ENCODE measurements at regions of chr2 and their contacts with region 1.

Region 1: DNA sequence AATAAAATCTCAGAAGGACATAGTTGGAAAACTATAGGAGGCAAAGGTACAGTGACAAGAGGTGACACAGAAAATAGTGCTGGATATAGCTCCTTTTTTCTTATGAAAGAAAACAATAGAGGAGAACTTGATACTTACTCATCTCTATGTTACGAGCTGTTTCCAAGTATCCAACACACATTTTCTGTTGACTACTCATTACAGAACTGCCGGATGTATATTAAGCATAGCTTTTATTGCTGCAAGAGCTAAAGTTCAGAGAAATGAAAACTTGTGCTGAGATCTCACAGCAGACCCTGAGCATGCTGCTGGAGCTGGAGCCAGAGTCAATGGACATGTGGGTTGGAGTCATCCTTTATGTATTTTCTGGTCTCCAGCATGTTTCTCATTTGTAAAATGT is 210.0 kb upstream of the NT5C1B start:
- DNase-seq: no peak
- ATAC-seq: no peak
- H3K4me3 ChIP-seq: no peak overlapping the region
- H3K27ac ChIP-seq: no peak overlapping the region
- H3K4me1 ChIP-seq: peaks cover 31% of the 10 kb centered on the region
- H3K27me3 ChIP-seq: peaks cover 0 to 26% of the 10 kb centered on the region in 2 experiments; a peak in 3 of 5 replicates
- CTCF ChIP-seq: no peak
- EP300 ChIP-seq: no peak
- POLR2A ChIP-seq: no peak
- RAD21 ChIP-seq: no peak

Region 2: DNA sequence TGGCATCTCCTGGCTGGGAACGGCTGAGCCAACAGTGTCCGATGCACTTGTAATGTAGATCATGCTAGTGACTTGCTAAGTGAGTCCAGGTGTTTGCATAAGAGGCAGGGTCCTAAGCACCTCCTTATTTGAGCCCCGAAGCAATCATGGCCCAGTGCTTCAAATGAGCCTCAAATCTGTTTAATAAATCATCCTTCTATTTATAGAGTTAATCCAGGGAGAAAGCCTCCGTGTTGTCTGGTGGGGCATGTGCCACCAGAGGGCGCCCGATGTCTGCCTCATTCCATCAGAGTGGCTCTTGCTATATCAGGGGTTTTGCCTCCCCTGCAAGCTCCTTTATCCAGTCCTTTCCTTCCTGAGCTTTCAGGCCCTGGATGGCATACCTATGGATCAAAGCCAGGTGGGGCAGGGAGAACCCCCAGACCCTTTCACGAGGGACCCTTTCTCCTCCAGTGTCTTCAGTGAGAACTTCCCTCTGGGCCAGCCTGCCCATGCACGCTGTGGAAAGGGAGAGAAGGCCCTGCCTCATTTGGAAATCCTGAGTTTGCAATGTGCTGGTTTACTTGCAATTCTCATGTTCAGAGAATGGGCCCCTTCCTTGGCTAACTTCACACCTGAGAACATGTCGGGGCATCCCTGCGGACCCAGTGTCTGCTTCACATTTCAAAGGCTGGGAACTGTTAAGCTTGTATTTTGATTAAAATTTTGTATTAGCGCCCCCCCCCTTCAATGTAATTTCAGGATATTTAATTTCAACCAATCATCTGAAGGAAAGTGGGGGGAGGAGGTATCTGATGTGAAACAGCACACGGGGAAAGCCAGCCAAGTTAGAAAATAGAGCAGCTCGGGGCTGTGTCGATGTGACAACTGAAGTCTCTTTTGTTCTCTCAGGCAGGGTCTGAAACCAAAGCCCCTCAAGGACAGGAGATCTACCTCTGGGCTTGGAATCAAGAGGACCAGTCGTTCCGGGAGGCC is 278.7 kb before region 1 on chr2:
- CTCF ChIA-PET with region 1: no interaction called
- POLR2A ChIA-PET with region 1: no interaction called
- in situ Hi-C with region 1: no loop called
- intact Hi-C with region 1: loop called (anchors 1 kb)
- DNase-seq: peak; percentile 71
- ATAC-seq: peak; percentile 96
- H3K4me3 ChIP-seq: no peak overlapping the region
- H3K27ac ChIP-seq: no peak overlapping the region
- H3K4me1 ChIP-seq: no peaks in the 10 kb centered on the region
- H3K27me3 ChIP-seq: peaks cover 2 to 11% of the 10 kb centered on the region in 2 experiments; a peak in 4 of 5 replicates
- CTCF ChIP-seq: peak; percentile 93
- EP300 ChIP-seq: no peak
- POLR2A ChIP-seq: no peak
- RAD21 ChIP-seq: peak; percentile 95

Region 3: DNA sequence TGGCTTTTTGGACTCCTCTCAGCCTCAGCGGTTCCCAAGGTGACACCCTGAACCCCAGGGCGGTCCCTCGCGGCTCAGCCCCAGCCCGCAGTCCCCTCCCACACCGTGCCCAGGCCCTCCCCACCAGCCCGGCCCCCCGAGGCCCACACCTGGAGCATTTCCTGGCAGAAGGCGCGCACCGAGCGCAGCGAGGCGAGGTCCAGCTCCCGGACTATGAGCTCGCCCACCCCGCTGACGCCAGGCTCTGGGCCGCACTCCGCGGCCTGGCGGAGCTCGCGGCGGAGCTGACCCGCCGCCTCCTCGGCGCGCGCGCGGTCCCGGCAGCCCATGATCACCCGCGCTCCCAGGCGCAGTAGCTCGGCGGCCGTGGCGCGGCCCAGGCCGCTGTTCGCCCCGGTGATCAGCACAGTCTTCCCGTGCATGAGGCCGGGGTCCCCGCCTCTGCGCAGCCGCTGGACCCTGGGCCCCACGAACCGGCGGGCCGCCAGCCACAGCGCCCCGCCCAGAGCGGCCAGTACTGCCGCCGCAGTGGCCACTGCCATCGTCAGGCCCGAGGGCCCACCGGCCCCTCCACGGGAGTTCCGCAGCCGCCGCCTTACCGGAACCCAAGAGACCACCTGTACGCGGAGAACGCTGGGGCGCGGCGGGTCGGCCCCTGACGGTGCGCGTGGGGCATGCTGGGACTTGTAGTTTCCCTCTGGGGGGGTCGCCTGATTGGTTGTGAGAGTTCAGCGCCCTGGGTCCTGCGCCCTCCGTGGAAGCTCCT is 239.2 kb before region 1 on chr2 and contains the start of gene RDH14:
- CTCF ChIA-PET with region 1: no interaction called
- POLR2A ChIA-PET with region 1: interaction called, 8 read pairs
- in situ Hi-C with region 1: no loop called
- intact Hi-C with region 1: loop called (anchors 1 kb)
- DNase-seq: peak; percentile 97
- ATAC-seq: peak; percentile 94
- H3K4me3 ChIP-seq: peak within 1 kb of the TSS; percentile 78 to 84 (median 83)
- H3K27ac ChIP-seq: peak within 1 kb of the TSS; percentile 87
- H3K4me1 ChIP-seq: peaks cover 27% of the 10 kb centered on the region
- H3K27me3 ChIP-seq: no peaks in the 10 kb centered on the region
- CTCF ChIP-seq: peak; percentile 35
- EP300 ChIP-seq: 0 out of 4 replicates have a peak, but pooled peaks of 1 of the 2 experiments have one; percentile 10
- POLR2A ChIP-seq: peak; percentile 70 to 74; a peak in 3 of 4 replicates
- RAD21 ChIP-seq: peak; percentile 79
- total RNA-seq, gene RDH14: 37.4 and 39.9 TPM in 2 replicates

Region 4: DNA sequence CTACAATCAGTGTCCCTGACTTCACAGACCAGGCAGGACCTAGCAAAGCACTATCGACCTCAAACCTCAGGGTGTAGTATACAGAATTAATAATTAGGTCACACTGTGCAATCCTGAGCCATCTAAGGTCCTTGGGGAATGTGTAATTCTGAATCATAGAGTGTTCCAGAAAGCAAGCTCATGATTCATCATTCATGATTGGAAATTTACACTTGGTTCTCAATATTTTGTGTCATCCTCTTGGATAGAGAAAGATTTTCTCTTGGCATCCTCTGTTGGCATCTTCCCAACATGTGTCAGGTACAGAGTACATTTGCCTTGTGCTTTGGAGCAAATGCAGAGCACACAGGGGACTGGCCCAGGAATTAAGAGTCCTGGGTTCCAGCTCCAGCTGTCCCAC is 34.9 kb after region 1 on chr2:
- CTCF ChIA-PET with region 1: no interaction called
- POLR2A ChIA-PET with region 1: interaction called, 4 read pairs
- in situ Hi-C with region 1: no loop called
- intact Hi-C with region 1: loop called (anchors 2 kb)
- DNase-seq: no peak
- ATAC-seq: no peak
- H3K4me3 ChIP-seq: no peak overlapping the region
- H3K27ac ChIP-seq: no peak overlapping the region
- H3K4me1 ChIP-seq: peaks cover 44% of the 10 kb centered on the region
- H3K27me3 ChIP-seq: no peaks in the 10 kb centered on the region
- CTCF ChIP-seq: no peak
- EP300 ChIP-seq: no peak
- POLR2A ChIP-seq: no peak
- RAD21 ChIP-seq: no peak

Region 5: GRCh38 chr2:18889565-18890332 is 90.4 kb after region 1 on chr2:
- CTCF ChIA-PET with region 1: no interaction called
- POLR2A ChIA-PET with region 1: no interaction called
- in situ Hi-C with region 1: no loop called
- intact Hi-C with region 1: loop called (anchors 1 kb)
- DNase-seq: peak; percentile 93
- ATAC-seq: peak; percentile 93
- H3K4me3 ChIP-seq: no peak overlapping the region
- H3K27ac ChIP-seq: no peak overlapping the region
- H3K4me1 ChIP-seq: peaks cover 16% of the 10 kb centered on the region
- H3K27me3 ChIP-seq: no peaks in the 10 kb centered on the region
- CTCF ChIP-seq: no peak
- EP300 ChIP-seq: peak in 1 of 2 experiments; percentile 61; a peak in 2 of 4 replicates
- POLR2A ChIP-seq: no peak
- RAD21 ChIP-seq: no peak

Region 6: GRCh38 chr2:19140596-19141219 is 341.3 kb after region 1 on chr2:
- CTCF ChIA-PET with region 1: no interaction called
- POLR2A ChIA-PET with region 1: no interaction called
- in situ Hi-C with region 1: no loop called
- intact Hi-C with region 1: loop called (anchors 1 kb)
- DNase-seq: peak; percentile 99
- ATAC-seq: peak; percentile 100
- H3K4me3 ChIP-seq: no peak overlapping the region
- H3K27ac ChIP-seq: no peak overlapping the region
- H3K4me1 ChIP-seq: peaks cover 19% of the 10 kb centered on the region
- H3K27me3 ChIP-seq: no peaks in the 10 kb centered on the region
- CTCF ChIP-seq: no peak
- EP300 ChIP-seq: peak; percentile 75 to 93
- POLR2A ChIP-seq: no peak
- RAD21 ChIP-seq: no peak

Region 7: DNA sequence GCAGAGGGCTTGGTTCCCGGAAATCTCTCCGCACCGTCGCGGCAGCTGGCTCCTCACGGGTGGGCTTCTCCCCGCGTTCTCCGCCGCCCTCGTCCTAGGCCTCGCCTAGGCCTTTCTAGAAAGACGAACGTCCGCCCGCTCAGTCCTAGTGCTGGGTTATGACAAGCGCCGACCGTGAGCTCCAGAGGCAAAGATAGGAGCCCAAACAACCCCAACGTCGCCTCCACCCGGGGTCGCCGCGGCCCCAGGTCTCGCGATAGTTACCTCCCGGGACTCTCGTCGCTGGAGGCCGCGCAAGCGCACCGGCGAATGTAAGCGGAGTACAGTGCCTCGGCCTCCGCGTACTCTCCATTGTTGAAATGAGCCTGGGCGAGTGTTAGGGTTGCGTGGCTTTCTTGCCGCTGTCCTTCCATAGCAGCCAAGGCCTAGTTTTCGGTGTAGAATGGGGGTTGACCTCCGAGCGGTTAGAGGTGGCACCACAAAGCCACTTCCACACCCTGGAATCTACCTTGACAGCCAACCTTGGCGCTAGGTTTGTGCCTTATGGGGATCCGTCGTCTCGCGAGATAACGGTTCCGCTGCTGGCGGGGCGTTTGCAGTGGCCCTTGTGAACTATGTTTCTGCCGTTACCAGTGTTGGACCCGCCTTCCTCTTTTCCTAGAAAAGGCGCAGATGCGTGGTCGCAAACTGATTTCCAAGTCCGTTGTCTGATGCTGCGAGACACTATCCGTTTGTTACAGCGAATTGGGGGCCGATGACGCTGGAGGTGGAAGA is 1102.2 kb after region 1 on chr2 and contains the start of gene TTC32:
- CTCF ChIA-PET with region 1: no interaction called
- POLR2A ChIA-PET with region 1: interaction called, 3 read pairs
- in situ Hi-C with region 1: no loop called
- intact Hi-C with region 1: loop called (anchors 5 kb)
- DNase-seq: peak; percentile 95
- ATAC-seq: peak; percentile 95
- H3K4me3 ChIP-seq: peak within 1 kb of the TSS; percentile 87 to 89 (median 87)
- H3K27ac ChIP-seq: peak within 1 kb of the TSS; percentile 95
- H3K4me1 ChIP-seq: peaks cover 30% of the 10 kb centered on the region
- H3K27me3 ChIP-seq: no peaks in the 10 kb centered on the region; a peak in 1 of 5 replicates
- CTCF ChIP-seq: peak; percentile 64
- EP300 ChIP-seq: no peak
- POLR2A ChIP-seq: peak; percentile 86 to 97
- RAD21 ChIP-seq: no peak; the same call in 1 of the 2 replicates
- total RNA-seq, gene TTC32: 18.5 and 21.6 TPM in 2 replicates